ENCODE measurements at regions of chr13 and their contacts with region 1.

Region 1: DNA sequence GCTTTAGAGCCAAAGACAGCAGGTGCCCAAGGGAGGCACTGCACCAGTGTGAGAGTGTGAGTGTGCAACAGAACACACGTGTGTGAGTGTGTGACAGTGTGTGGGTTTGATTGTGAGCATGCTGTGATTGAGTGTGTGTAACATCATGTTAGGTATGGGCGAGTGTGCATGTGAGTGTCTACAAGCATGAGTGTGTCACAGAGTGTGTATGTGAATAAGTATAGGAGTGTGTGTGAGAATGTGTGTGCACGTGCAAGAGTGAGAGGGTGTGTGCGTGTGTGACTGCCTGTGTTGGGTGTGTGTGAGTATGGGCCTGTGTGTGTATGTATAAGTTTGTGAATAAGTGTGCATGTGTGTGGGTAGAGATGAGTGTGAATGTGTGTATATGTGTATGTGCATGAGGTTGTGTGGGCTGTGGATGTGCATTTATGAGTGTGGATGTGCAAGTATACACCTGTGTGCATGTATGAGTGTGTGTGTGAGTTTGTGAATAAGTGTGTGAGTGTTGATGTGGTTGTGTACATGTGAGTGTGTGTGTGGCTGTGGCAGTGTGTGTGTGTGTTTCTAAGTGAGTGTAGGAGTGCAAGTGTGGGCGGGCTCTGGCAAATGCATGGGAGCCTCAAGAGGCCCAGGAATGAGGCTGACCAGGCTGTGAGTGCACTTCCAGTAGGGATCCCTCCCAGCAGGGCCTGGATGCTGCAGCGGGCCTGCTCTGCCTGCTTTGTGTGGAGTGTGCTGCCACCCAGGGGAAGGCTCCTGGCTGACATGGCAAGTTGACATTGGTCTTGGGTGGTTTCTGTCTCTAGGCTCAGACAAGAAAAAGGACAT is 198.4 kb downstream of the COL4A1 start:
- DNase-seq: peak; percentile 93
- H3K4me3 ChIP-seq: no peak overlapping the region
- H3K27ac ChIP-seq: peak overlapping the region; percentile 70 to 85 (median 82)
- H3K4me1 ChIP-seq: peaks cover 30 to 46% (median 41%) of the 10 kb centered on the region in 4 donors
- H3K27me3 ChIP-seq: no peaks in the 10 kb centered on the region
- CTCF ChIP-seq: peak; percentile 67 to 84 (median 77)
- EP300 ChIP-seq: no peak
- POLR2A ChIP-seq: no peak

Region 2: GRCh38 chr13:108915634-108916512 is 1192.7 kb before region 1 on chr13:
- intact Hi-C with region 1: loop called (anchors 5 kb)
- DNase-seq: peak; percentile 96
- H3K4me3 ChIP-seq: peak overlapping the region; percentile 26 to 41 (median 33)
- H3K27ac ChIP-seq: peak overlapping the region; percentile 81 to 88 (median 85)
- H3K4me1 ChIP-seq: peaks cover 9 to 52% (median 38%) of the 10 kb centered on the region in 4 donors
- H3K27me3 ChIP-seq: no peaks in the 10 kb centered on the region
- CTCF ChIP-seq: no peak
- EP300 ChIP-seq: peak; percentile 31
- POLR2A ChIP-seq: no peak

Region 3: DNA sequence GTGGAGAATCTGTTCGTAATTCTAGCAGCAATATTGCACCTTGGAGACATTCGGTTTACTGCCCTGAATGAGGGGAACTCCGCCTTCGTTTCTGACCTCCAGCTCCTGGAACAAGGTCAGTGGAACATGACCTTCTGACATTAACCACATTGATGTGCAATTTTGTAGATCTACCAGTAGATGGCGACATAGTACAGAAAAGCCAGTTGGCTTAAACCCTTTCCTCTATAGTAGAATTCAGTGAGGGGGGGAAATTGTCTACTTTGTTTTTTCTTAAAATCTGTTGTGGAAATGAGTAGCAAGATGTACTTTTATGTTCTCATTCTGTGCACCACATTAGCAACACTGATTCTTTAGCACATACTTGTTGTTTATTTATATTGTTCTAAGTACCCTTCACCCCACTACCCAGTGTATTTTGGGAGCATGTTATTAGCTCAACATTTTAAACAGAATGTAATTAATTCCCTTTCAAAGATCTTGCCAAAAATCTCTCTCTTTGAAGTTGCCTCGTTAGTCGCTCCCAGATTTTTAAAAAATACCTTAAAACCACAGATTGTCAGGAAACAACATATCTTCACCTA is 1146.9 kb before region 1 on chr13:
- intact Hi-C with region 1: loop called (anchors 5 kb)
- DNase-seq: no peak
- H3K4me3 ChIP-seq: no peak overlapping the region
- H3K27ac ChIP-seq: no peak overlapping the region
- H3K4me1 ChIP-seq: peaks cover 0 to 27% (median 20%) of the 10 kb centered on the region in 4 donors
- H3K27me3 ChIP-seq: no peaks in the 10 kb centered on the region
- CTCF ChIP-seq: peak; percentile 85 to 89 (median 89)
- EP300 ChIP-seq: no peak
- POLR2A ChIP-seq: no peak

Region 4: GRCh38 chr13:109145631-109146030 is 962.9 kb before region 1 on chr13:
- intact Hi-C with region 1: loop called (anchors 5 kb)
- DNase-seq: no peak
- H3K4me3 ChIP-seq: no peak overlapping the region
- H3K27ac ChIP-seq: peak overlapping the region; percentile 33 to 81 (median 62)
- H3K4me1 ChIP-seq: peaks cover 0 to 56% (median 40%) of the 10 kb centered on the region in 4 donors
- H3K27me3 ChIP-seq: peaks cover 0 to 7% (median 0%) of the 10 kb centered on the region in 4 donors
- CTCF ChIP-seq: peak; percentile 77 to 84 (median 80)
- EP300 ChIP-seq: no peak
- POLR2A ChIP-seq: no peak

Region 5: GRCh38 chr13:109786457-109787134 is 322.0 kb before region 1 on chr13 and contains the start of gene IRS2:
- intact Hi-C with region 1: loop called (anchors 5 kb)
- DNase-seq: peak; percentile 98
- H3K4me3 ChIP-seq: peak within 1 kb of the TSS; percentile 83 to 98 (median 96)
- H3K27ac ChIP-seq: peak within 1 kb of the TSS; percentile 94 to 98 (median 97)
- H3K4me1 ChIP-seq: peaks cover 26 to 71% (median 59%) of the 10 kb centered on the region in 4 donors
- H3K27me3 ChIP-seq: no peaks in the 10 kb centered on the region
- CTCF ChIP-seq: no peak
- EP300 ChIP-seq: no peak
- POLR2A ChIP-seq: peak; percentile 94
- total RNA-seq, gene IRS2: 46.4 to 95.3 (median 63.7) TPM

Region 6: DNA sequence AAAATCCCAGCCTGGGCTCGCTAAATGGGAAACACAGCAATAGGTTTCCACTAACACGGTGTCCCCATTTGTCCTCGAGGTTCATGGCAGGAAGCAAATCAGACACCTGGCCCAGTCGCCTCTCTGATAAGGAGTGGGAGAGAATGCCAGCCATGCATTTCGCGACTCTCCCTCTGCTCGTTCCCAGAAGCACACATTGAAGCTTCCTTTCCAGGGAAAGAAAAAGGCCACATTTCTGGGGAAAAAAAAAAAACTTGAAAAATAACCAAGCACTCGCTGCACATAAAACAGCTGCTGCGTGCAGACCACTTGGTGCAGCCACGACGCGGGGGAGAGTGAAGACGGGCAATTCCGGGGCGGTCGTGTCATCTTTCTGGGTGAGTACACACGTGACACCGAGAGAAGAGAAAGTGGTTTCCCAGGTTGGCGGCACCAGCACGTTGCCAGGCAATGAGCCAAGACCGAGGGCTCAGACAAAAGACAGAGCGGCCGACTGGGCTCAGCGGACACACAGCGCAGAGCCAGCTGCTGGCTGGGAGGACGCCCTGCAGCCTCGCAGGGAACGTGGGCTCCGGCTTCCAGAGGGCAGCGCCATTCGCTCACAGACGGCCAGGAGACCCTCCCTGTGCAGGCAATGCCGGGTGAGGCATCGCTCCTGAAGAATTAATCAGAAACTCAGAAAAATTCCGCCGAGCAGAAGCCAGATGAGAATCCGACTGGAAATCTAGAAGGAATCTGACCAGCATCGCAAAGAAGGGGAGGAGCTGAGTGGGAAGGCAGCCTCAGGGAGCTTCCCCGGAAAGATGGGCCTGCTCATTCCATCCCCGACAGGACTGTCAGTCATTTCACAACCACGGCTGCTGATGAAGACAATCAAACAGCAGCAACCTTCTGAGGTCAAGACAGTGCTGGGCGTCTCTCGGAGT is 239.0 kb before region 1 on chr13:
- intact Hi-C with region 1: loop called (anchors 10 kb)
- DNase-seq: peak; percentile 85
- H3K4me3 ChIP-seq: peak overlapping the region; percentile 47 to 56 (median 54)
- H3K27ac ChIP-seq: peak overlapping the region; percentile 62 to 67 (median 64)
- H3K4me1 ChIP-seq: peaks cover 17 to 35% (median 22%) of the 10 kb centered on the region in 4 donors
- H3K27me3 ChIP-seq: no peaks in the 10 kb centered on the region
- CTCF ChIP-seq: peak; percentile 22 to 49 (median 31)
- EP300 ChIP-seq: no peak
- POLR2A ChIP-seq: no peak